Esophagus squamous epithelium (tissue), 5 donors: ENCODE measurements at regions of chr15 and their contacts with region 1.

Region 1: DNA sequence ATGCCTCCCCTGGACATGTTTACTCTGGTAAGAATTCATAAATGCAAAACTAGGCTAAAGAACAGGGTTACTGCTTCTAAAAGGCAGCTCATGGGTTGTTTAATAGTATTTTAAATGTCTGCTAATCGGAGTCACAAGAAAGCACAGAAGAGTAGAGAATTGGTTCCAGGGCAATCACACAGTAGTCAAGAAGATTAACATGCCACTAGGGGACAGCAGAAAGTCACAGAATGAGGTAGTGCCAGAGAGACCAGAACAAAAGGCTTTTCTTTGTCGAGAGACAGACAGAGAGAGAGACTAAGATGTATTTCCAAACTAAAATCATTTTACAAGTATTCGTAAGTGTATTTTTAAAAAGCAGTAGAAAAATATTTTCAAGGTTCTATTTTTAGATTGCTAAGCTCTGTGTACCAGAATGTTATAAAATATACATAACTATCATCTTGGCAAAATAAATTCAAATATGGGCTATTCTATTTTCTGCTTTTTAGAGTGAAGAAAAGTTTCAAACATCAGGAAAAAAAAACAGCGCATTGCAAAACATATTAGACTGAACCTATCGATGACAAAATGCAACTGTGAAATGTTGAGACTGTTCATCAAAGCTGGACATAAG is 78.3 kb upstream of the CDIN1 start:
- DNase-seq: no peak
- H3K4me3 ChIP-seq: no peak overlapping the region
- H3K27ac ChIP-seq: peak overlapping the region in 1 of 4 donors; percentile 0
- H3K4me1 ChIP-seq: peaks cover 0 to 3% (median 0%) of the 10 kb centered on the region in 3 donors
- H3K27me3 ChIP-seq: no peaks in the 10 kb centered on the region
- CTCF ChIP-seq: peak; percentile 27 to 76 (median 62)
- POLR2A ChIP-seq: no peak

Region 2: DNA sequence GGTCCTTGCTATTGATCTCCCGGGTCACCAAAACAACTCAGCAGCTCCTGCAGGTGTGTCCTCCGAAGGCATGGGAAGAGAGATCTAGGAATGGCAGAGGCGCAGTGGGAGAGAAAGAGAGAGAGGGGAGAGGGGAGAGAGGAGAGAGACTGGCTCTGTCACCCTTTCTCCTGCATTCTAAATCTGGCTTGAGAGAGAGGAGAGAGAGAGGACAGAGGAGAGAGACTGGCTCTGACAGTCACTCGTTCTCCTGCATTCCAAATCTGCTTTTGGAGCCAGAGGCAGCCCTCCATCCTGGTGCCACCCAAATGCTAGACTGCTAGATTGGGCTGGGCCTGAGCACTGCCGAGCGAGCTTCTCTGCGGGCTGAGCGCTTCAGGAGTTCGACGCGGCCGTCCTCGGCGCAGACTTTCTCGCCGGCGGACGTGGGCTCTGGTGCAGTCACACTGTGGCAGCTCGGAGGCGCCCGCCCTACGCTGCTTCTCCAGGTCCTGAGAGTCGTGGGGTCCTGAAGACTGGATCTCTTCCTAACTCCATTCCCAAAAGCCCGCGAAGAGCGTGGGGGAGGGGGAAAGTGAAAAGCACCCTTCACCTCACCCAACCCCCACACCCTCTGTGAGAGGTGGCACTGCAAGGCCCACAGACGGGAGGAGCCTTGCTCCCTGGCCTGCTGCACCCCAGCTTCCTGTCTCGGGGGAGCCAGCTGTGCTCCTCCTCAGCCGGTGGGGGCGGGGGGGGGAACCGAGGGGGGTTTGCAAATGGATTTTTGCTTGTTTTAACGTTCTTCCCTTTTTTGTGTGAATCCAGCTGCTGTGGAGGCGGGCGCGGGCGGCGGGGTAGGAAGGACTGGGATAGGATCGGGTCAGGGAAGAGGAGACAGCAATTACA is 376.9 kb after region 1 on chr15:
- intact Hi-C with region 1: loop called (anchors 10 kb)
- DNase-seq: no peak
- H3K4me3 ChIP-seq: peak overlapping the region in 1 of 4 donors; percentile 22
- H3K27ac ChIP-seq: no peak overlapping the region
- H3K4me1 ChIP-seq: peaks cover 0 to 21% (median under 1%) of the 10 kb centered on the region in 3 donors
- H3K27me3 ChIP-seq: peaks cover 0 to 55% (median 8%) of the 10 kb centered on the region in 4 donors
- CTCF ChIP-seq: no peak
- POLR2A ChIP-seq: no peak